ENCODE measurements at regions of chr2 and their contacts with region 1.

Region 1: DNA sequence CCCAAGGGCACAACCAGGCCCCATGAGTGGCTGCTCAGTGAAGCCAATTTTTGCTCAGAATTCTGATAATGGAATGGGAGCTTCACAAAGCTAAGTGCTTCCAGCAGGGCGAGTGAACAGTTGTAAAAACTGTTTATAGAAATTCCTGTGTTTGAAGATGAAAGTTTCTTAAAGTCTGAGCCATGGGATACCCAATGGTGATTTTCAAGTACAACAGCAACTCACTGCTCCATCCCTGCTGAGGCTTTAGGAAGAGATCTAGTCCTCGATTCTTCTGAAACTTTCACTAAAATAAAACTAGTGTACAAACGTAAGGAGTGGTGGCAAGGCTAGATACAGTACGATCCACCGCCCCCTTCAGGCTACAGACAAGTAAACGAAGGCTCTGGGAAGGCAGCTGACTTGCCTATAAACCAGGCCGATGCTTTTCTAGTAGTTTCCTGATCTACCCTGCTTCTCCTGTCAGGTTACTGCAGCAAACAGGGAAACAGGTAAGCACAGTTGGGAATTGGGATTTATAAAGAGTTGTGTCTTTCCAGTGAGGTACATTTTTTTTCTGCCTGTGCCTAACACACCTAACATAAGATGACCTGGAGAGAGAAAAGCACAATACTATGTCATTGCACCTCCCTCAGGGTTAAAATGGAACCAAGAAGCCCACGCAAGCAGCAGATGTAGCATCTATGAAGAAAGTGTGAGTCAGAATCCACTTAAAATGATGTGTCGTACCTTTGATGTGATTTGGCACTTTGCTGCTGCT is 108.7 kb downstream of the UXS1 start:
- DNase-seq: no peak
- ATAC-seq: peak; percentile 81
- H3K4me3 ChIP-seq: no peak overlapping the region
- H3K27ac ChIP-seq: no peak overlapping the region
- H3K4me1 ChIP-seq: no peaks in the 10 kb centered on the region
- H3K27me3 ChIP-seq: 0 out of 2 replicates have a peak, but pooled peaks cover 2% of the 10 kb centered on the region
- CTCF ChIP-seq: peak; percentile 52

Region 2: DNA sequence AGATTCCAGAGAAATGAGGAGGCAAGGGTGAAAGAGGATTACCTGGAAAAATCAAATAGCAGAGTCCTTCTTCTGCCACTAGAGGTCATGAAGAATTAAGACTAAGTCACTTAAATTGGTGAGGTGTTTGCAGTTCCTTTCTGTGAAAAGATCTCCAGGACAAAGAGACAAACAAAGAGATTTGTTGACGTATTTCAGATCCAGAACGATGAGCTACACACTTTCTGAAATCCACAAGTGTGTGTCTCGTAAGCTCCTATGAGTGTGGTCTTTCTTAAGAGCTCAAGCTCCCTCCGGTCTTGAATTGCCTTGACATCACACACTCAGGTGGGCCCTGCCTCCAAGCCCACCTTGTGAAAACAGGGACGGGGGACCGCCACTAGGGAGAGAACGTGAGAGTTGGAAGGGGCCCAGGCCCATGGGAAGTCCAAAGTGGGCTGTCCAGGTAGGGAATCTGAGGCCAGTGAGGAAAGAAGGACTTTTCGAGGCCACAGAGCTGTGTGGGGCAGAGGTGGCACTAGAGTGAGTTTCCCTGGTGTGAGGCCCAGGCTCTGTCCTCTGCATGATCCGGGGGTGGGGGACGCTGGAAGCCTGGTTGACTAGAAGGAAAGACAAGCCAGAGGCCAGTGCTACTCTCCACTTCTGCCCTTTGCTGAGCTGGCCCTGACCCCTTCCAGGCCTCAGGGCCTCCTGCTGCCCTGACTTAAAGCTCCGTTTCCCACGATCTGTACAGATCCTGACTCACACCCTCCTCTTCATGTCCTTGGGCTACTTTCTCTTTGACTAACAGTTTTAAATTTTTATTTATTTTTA is 508.7 kb before region 1 on chr2:
- CTCF ChIA-PET with region 1: interaction called, 3 read pairs
- POLR2A ChIA-PET with region 1: no interaction called
- in situ Hi-C with region 1: no loop called
- intact Hi-C with region 1: loop called (anchors 10 kb)
- DNase-seq: peak; percentile 32
- ATAC-seq: peak; percentile 83
- H3K4me3 ChIP-seq: peak overlapping the region in 1 of 2 experiments; percentile 26; a peak in 2 of 4 replicates
- H3K27ac ChIP-seq: peak overlapping the region; percentile 57; the same call in 1 of the 2 replicates
- H3K4me1 ChIP-seq: peaks cover 12% of the 10 kb centered on the region
- H3K27me3 ChIP-seq: no peaks in the 10 kb centered on the region
- CTCF ChIP-seq: peak; percentile 81

Region 3: GRCh38 chr2:106065268-106065982 is 19.9 kb before region 1 on chr2:
- CTCF ChIA-PET with region 1: no interaction called
- POLR2A ChIA-PET with region 1: no interaction called
- in situ Hi-C with region 1: no loop called
- intact Hi-C with region 1: no loop called
- DNase-seq: no peak
- ATAC-seq: no peak
- H3K4me3 ChIP-seq: no peak overlapping the region
- H3K27ac ChIP-seq: no peak overlapping the region
- H3K4me1 ChIP-seq: no peaks in the 10 kb centered on the region
- H3K27me3 ChIP-seq: no peaks in the 10 kb centered on the region; the same call in none of the 2 replicates
- CTCF ChIP-seq: no peak

Region 4: GRCh38 chr2:106097038-106098000 is 12.0 kb after region 1 on chr2:
- CTCF ChIA-PET with region 1: no interaction called
- POLR2A ChIA-PET with region 1: interaction called, 13 read pairs
- in situ Hi-C with region 1: no loop called
- intact Hi-C with region 1: no loop called
- DNase-seq: no peak
- ATAC-seq: 0 out of 2 replicates have a peak, but pooled peaks have one; percentile 20
- H3K4me3 ChIP-seq: no peak overlapping the region
- H3K27ac ChIP-seq: no peak overlapping the region
- H3K4me1 ChIP-seq: no peaks in the 10 kb centered on the region
- H3K27me3 ChIP-seq: no peaks in the 10 kb centered on the region
- CTCF ChIP-seq: no peak

Region 5: GRCh38 chr2:106115250-106115649 is 29.9 kb after region 1 on chr2:
- CTCF ChIA-PET with region 1: no interaction called
- POLR2A ChIA-PET with region 1: no interaction called
- in situ Hi-C with region 1: no loop called
- intact Hi-C with region 1: no loop called
- DNase-seq: peak; percentile 57
- ATAC-seq: peak; percentile 78; the same call in 1 of the 2 replicates
- H3K4me3 ChIP-seq: no peak overlapping the region
- H3K27ac ChIP-seq: no peak overlapping the region
- H3K4me1 ChIP-seq: no peaks in the 10 kb centered on the region
- H3K27me3 ChIP-seq: no peaks in the 10 kb centered on the region
- CTCF ChIP-seq: no peak